Calu3 (cell line): ENCODE measurements at regions of chr2 and their contacts with region 1.

Region 1: GRCh38 chr2:67840460-67841068 is 222.2 kb downstream of the C1D start:
- DNase-seq: peak; percentile 82
- H3K4me3 Mint-ChIP-seq: no peak overlapping the region
- H3K27ac Mint-ChIP-seq: no peak overlapping the region
- H3K4me1 Mint-ChIP-seq: peaks cover 11% of the 10 kb centered on the region
- H3K27me3 Mint-ChIP-seq: no peaks in the 10 kb centered on the region
- CTCF ChIP-seq: peak; percentile 63

Region 2: DNA sequence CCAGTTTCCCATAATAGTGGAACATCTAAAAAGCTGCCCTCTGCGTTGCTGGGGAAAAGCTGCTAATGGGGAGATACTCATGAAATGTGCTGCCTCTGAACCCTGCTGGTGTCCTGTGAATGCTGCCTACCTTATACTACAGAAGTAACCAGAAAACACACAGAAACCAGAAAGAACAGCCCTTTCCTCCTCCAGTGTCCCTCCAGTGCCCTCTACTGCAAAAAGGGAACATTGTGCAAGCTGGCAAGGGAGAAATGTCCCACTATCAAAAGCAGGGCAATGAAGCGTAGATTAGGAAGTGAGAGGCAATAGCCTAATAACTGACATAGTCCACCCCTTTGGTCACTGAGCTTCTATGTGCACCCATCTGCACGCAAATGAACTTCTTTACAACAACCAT is 606.1 kb before region 1 on chr2:
- CTCF ChIA-PET with region 1: no interaction called
- intact Hi-C with region 1: loop called (anchors 10 kb)
- DNase-seq: peak; percentile 22
- H3K4me3 Mint-ChIP-seq: no peak overlapping the region
- H3K27ac Mint-ChIP-seq: no peak overlapping the region
- H3K4me1 Mint-ChIP-seq: peaks cover 33% of the 10 kb centered on the region
- H3K27me3 Mint-ChIP-seq: no peaks in the 10 kb centered on the region
- CTCF ChIP-seq: peak; percentile 28

Region 3: GRCh38 chr2:67486041-67486796 is 354.3 kb before region 1 on chr2:
- CTCF ChIA-PET with region 1: no interaction called
- intact Hi-C with region 1: loop called (anchors 5 kb)
- DNase-seq: peak; percentile 59
- H3K4me3 Mint-ChIP-seq: no peak overlapping the region
- H3K27ac Mint-ChIP-seq: no peak overlapping the region
- H3K4me1 Mint-ChIP-seq: peaks cover 13% of the 10 kb centered on the region
- H3K27me3 Mint-ChIP-seq: no peaks in the 10 kb centered on the region
- CTCF ChIP-seq: no peak

Region 4: GRCh38 chr2:67733517-67733916 is 107.0 kb before region 1 on chr2:
- CTCF ChIA-PET with region 1: interaction called, 18 read pairs
- intact Hi-C with region 1: loop called (anchors 1 kb)
- DNase-seq: peak; percentile 58
- H3K4me3 Mint-ChIP-seq: no peak overlapping the region
- H3K27ac Mint-ChIP-seq: no peak overlapping the region
- H3K4me1 Mint-ChIP-seq: no peaks in the 10 kb centered on the region
- H3K27me3 Mint-ChIP-seq: no peaks in the 10 kb centered on the region
- CTCF ChIP-seq: no peak